Panc1 (cell line): ENCODE measurements at regions of chr4 and their contacts with region 1.

Region 1: GRCh38 chr4:124017185-124017785 is 620.7 kb downstream of the SPRY1 start:
- DNase-seq: no peak
- ATAC-seq: no peak
- H3K4me3 ChIP-seq: no peak overlapping the region
- H3K27ac ChIP-seq: no peak overlapping the region
- H3K4me1 ChIP-seq: no peaks in the 10 kb centered on the region
- H3K27me3 ChIP-seq: no peaks in the 10 kb centered on the region
- CTCF ChIP-seq: no peak

Region 2: DNA sequence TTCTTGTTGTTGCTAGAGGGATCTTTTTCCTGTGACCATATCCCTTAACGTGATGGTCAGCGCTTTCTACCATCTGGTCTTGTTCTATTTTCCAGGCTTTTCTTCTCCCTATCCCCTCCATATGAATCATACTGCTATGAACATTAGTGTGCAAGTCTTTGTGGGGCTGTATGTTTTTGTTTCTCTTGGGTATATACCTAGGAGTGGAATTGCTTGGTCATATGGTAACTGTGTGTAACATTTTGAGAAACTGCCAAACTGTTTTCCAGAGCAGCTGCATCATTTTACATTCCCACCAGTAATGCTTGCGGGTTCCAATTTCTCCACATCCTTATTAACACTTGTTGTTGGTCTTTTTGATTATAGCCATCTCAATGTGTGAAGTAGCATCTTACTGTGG is 499.3 kb before region 1 on chr4:
- CTCF ChIA-PET with region 1: no interaction called
- POLR2A ChIA-PET with region 1: interaction called, 11 read pairs
- in situ Hi-C with region 1: no loop called
- intact Hi-C with region 1: no loop called
- DNase-seq: no peak
- ATAC-seq: no peak
- H3K4me3 ChIP-seq: no peak overlapping the region
- H3K27ac ChIP-seq: no peak overlapping the region; the same call in 1 of the 2 replicates
- H3K4me1 ChIP-seq: peaks cover 8% of the 10 kb centered on the region; the same call in 1 of the 2 replicates
- H3K27me3 ChIP-seq: no peaks in the 10 kb centered on the region
- CTCF ChIP-seq: no peak

Region 3: DNA sequence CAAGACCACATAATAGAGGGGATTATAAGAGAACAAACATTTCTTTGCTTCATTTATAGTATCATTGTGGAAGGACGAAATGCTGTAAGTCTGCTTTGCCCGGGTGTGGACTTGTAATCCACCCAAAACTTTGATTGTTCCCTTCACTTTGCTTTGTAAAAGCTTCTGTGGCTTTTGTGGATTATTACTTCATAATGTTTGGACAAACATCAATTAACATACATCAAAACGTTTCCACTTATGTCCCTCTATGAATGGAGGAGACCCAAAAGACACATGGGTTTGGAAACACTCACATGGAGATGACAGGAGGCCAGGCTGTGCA is 205.3 kb before region 1 on chr4:
- CTCF ChIA-PET with region 1: no interaction called
- POLR2A ChIA-PET with region 1: no interaction called
- in situ Hi-C with region 1: no loop called
- intact Hi-C with region 1: no loop called
- DNase-seq: no peak
- ATAC-seq: no peak
- H3K4me3 ChIP-seq: no peak overlapping the region
- H3K27ac ChIP-seq: no peak overlapping the region
- H3K4me1 ChIP-seq: no peaks in the 10 kb centered on the region
- H3K27me3 ChIP-seq: no peaks in the 10 kb centered on the region
- CTCF ChIP-seq: no peak

Region 4: DNA sequence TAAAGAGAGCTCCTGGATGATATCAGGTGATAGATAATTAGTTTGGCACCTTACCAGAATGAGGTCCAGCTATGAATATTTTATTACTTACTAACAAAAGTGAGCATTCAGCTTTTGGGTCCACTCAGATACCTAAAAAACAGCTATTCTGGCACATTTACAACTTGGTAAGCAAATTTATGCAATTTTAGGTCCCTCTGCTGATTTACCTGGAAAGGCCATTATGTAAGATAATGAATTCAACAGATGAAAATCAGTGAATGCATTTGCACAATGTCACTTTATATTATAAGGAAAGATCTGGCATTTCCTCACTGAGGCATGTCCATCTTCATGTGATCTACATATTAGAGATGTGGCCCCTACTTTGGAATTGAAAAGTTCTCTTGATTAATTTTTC is 103.7 kb before region 1 on chr4:
- CTCF ChIA-PET with region 1: no interaction called
- POLR2A ChIA-PET with region 1: no interaction called
- in situ Hi-C with region 1: no loop called
- intact Hi-C with region 1: no loop called
- DNase-seq: no peak
- ATAC-seq: no peak
- H3K4me3 ChIP-seq: no peak overlapping the region
- H3K27ac ChIP-seq: no peak overlapping the region
- H3K4me1 ChIP-seq: no peaks in the 10 kb centered on the region
- H3K27me3 ChIP-seq: no peaks in the 10 kb centered on the region
- CTCF ChIP-seq: no peak